Mammary epithelial cell (primary cell): ENCODE measurements at regions of chr14 and their contacts with region 1.

Region 1: DNA sequence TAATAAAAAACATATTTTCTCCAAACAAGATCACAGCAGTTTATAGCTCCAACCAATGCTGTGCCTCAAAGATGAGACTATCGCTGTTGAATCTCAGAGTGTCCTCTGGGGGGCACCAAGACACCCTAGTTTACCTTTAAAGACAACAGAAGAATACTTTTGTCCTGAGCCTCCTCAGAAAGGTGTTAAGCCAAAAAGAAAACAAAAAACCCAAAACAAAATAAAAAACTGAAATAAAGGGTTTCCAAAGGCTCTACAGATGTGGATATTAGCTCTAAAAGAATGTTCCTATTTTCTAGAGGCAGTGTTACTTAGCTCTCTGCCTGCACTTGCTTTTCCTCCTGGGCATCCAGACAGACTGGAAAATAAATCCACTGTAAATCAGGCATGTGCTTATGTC is 86.9 kb upstream of the TTC7B start:
- DNase-seq: peak; percentile 38
- H3K4me3 ChIP-seq: no peak overlapping the region
- H3K27ac ChIP-seq: no peak overlapping the region
- H3K4me1 ChIP-seq: no peaks in the 10 kb centered on the region
- H3K27me3 ChIP-seq: no peaks in the 10 kb centered on the region
- CTCF ChIP-seq: peak; percentile 76 to 86

Region 2: GRCh38 chr14:90697577-90698206 is 205.4 kb before region 1 on chr14:
- CTCF ChIA-PET with region 1: no interaction called
- dilution Hi-C with region 1: no loop called
- in situ Hi-C with region 1: no loop called
- intact Hi-C with region 1: loop called (anchors 1 kb)
- DNase-seq: peak; percentile 62
- H3K4me3 ChIP-seq: no peak overlapping the region
- H3K27ac ChIP-seq: no peak overlapping the region
- H3K4me1 ChIP-seq: no peaks in the 10 kb centered on the region
- H3K27me3 ChIP-seq: no peaks in the 10 kb centered on the region
- CTCF ChIP-seq: peak; percentile 94 to 95

Region 3: GRCh38 chr14:90892970-90893369 is 10.1 kb before region 1 on chr14:
- CTCF ChIA-PET with region 1: no interaction called
- dilution Hi-C with region 1: no loop called
- in situ Hi-C with region 1: no loop called
- intact Hi-C with region 1: no loop called
- DNase-seq: no peak
- H3K4me3 ChIP-seq: no peak overlapping the region
- H3K27ac ChIP-seq: no peak overlapping the region
- H3K4me1 ChIP-seq: no peaks in the 10 kb centered on the region
- H3K27me3 ChIP-seq: no peaks in the 10 kb centered on the region
- CTCF ChIP-seq: no peak

Region 4: DNA sequence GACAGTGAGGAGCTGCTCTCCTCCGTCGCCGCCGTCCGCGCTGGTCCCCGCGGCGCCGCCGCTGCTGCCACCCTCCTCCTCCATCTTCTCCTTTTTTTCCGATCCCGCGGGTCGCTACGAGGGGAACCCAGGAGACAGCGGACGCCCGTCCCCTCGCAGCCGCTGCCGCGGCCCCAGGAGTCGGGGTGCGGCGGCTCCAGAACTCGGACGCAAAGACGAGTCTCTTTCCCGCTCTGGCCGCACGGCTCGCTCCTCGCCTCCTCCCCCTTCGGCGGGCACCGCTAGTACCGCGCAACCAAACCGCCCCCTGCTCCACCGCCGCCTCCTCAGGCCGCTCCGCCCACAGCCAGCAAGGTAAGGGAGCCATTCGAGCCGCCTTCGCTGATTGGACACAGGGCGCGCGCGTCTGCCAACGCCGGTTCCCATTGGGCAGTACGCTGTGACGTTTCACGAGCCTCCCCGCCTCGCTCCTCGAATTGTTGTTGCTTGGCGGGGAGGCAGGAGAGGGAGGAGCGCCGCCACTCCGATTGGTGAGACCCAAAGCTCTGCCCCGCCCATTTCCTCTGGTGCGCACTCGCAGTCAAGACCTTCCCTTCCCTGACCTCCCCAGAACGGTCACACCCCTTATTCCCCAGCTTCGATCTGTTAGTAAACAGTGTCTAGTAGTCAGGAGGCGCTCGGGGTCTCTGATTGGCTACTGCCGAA is 157.4 kb after region 1 on chr14 and contains the start of gene RPS6KA5:
- CTCF ChIA-PET with region 1: interaction called, 4 read pairs
- dilution Hi-C with region 1: no loop called
- in situ Hi-C with region 1: loop called in 1 of 2 experiments (anchors 10 kb)
- intact Hi-C with region 1: loop called (anchors 1 kb)
- DNase-seq: peak; percentile 100
- H3K4me3 ChIP-seq: peak within 1 kb of the TSS; percentile 92 to 94 (median 93)
- H3K27ac ChIP-seq: peak within 1 kb of the TSS; percentile 93
- H3K4me1 ChIP-seq: peaks cover 22% of the 10 kb centered on the region
- H3K27me3 ChIP-seq: no peaks in the 10 kb centered on the region
- CTCF ChIP-seq: no peak
- total RNA-seq, gene RPS6KA5: 4.8 to 10.9 TPM

Region 5: DNA sequence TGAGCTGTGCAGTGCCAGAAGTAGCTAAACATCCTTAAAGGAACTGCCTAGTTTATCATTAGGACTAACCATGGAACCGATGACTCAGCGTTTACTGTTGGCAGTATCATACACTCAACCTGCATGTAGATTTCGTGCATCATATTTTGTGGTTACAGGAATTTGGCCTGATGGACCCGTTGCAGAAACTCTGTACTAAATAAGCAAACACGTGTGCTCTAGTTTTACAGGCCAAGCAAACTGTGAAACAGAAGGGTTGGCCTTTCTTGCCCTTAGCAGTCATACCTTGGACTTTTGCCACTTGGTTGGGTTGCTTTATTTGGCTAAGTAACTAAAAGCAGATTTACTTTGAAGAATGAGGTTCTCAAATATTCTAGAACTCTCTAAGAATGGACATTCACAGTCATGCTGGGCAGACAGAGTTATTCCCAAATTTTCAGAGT is 246.4 kb after region 1 on chr14:
- CTCF ChIA-PET with region 1: no interaction called
- dilution Hi-C with region 1: loop called (anchors 5 kb)
- in situ Hi-C with region 1: loop called (anchors 10 kb)
- intact Hi-C with region 1: no loop called
- DNase-seq: peak; percentile 98
- H3K4me3 ChIP-seq: no peak overlapping the region
- H3K27ac ChIP-seq: peak overlapping the region; percentile 42
- H3K4me1 ChIP-seq: peaks cover 12% of the 10 kb centered on the region
- H3K27me3 ChIP-seq: no peaks in the 10 kb centered on the region
- CTCF ChIP-seq: no peak

Region 6: GRCh38 chr14:91281346-91281745 is 378.2 kb after region 1 on chr14:
- CTCF ChIA-PET with region 1: no interaction called
- dilution Hi-C with region 1: no loop called
- in situ Hi-C with region 1: loop called in 1 of 2 experiments (anchors 25 kb)
- intact Hi-C with region 1: loop called (anchors 1 kb)
- DNase-seq: peak; percentile 83
- H3K4me3 ChIP-seq: no peak overlapping the region
- H3K27ac ChIP-seq: no peak overlapping the region
- H3K4me1 ChIP-seq: peaks cover 41% of the 10 kb centered on the region
- H3K27me3 ChIP-seq: no peaks in the 10 kb centered on the region
- CTCF ChIP-seq: no peak